Sigmoid colon (tissue), 7 donors: ENCODE measurements at regions of chr21 and their contacts with region 1.

Region 1: GRCh38 chr21:34190576-34191321 is 117.4 kb downstream of the MRPS6 start:
- DNase-seq: no peak
- H3K4me3 ChIP-seq: no peak overlapping the region
- H3K27ac ChIP-seq: no peak overlapping the region
- H3K4me1 ChIP-seq: no peaks in the 10 kb centered on the region
- H3K27me3 ChIP-seq: no peaks in the 10 kb centered on the region
- CTCF ChIP-seq: no peak
- EP300 ChIP-seq: no peak
- POLR2A ChIP-seq: no peak

Region 2: GRCh38 chr21:34143685-34144182 is 47.0 kb before region 1 on chr21:
- intact Hi-C with region 1: loop called (anchors 5 kb)
- DNase-seq: no peak
- H3K4me3 ChIP-seq: no peak overlapping the region
- H3K27ac ChIP-seq: peak overlapping the region in 1 of 4 donors; percentile 2
- H3K4me1 ChIP-seq: peaks cover 0 to 40% (median 24%) of the 10 kb centered on the region in 4 donors
- H3K27me3 ChIP-seq: no peaks in the 10 kb centered on the region
- CTCF ChIP-seq: no peak
- EP300 ChIP-seq: no peak
- POLR2A ChIP-seq: no peak

Region 3: GRCh38 chr21:34305605-34306604 is 115.2 kb after region 1 on chr21:
- intact Hi-C with region 1: no loop called
- DNase-seq: no peak
- H3K4me3 ChIP-seq: no peak overlapping the region
- H3K27ac ChIP-seq: peak overlapping the region in 1 of 4 donors; percentile 23
- H3K4me1 ChIP-seq: peaks cover 0 to 22% (median 12%) of the 10 kb centered on the region in 4 donors
- H3K27me3 ChIP-seq: no peaks in the 10 kb centered on the region
- CTCF ChIP-seq: no peak
- EP300 ChIP-seq: no peak
- POLR2A ChIP-seq: no peak